Ovary (tissue), 10 donors: ENCODE measurements at regions of chr10 and their contacts with region 1.

Region 1: GRCh38 chr10:97676770-97677581 is 10.1 kb downstream of the AVPI1 start:
- DNase-seq: peak in 2 of 5 donors; percentile 23 to 48
- H3K4me3 ChIP-seq: no peak overlapping the region
- H3K27ac ChIP-seq: no peak overlapping the region
- H3K4me1 ChIP-seq: no peaks in the 10 kb centered on the region
- H3K27me3 ChIP-seq: no peaks in the 10 kb centered on the region
- CTCF ChIP-seq: peak; percentile 68 to 88 (median 79)
- EP300 ChIP-seq: no peak
- POLR2A ChIP-seq: no peak

Region 2: GRCh38 chr10:97736902-97737769 is 60.2 kb after region 1 on chr10 and contains the start of gene ZFYVE27:
- intact Hi-C with region 1: loop called in 3 of 4 experiments (anchors 2 to 10 kb)
- DNase-seq: peak; percentile 97 to 99 (median 98)
- H3K4me3 ChIP-seq: peak within 1 kb of the TSS; percentile 68
- H3K27ac ChIP-seq: peak within 1 kb of the TSS in 1 of 2 donors; percentile 75
- H3K4me1 ChIP-seq: peaks cover 3% of the 10 kb centered on the region
- H3K27me3 ChIP-seq: no peaks in the 10 kb centered on the region
- CTCF ChIP-seq: no peak
- EP300 ChIP-seq: no peak
- POLR2A ChIP-seq: peak; percentile 96
- total RNA-seq, gene ZFYVE27: 20.8 to 30.1 (median 25.8) TPM